Activated CD4-positive, alpha-beta T cell treated with anti-CD3 and anti-CD28 coated beads, Interleukin-2, amount 10 ng/mL, durations not matched to agents 24 days and 14 days (primary cell): ENCODE measurements at regions of chr14 and their contacts with region 1.

Region 1: DNA sequence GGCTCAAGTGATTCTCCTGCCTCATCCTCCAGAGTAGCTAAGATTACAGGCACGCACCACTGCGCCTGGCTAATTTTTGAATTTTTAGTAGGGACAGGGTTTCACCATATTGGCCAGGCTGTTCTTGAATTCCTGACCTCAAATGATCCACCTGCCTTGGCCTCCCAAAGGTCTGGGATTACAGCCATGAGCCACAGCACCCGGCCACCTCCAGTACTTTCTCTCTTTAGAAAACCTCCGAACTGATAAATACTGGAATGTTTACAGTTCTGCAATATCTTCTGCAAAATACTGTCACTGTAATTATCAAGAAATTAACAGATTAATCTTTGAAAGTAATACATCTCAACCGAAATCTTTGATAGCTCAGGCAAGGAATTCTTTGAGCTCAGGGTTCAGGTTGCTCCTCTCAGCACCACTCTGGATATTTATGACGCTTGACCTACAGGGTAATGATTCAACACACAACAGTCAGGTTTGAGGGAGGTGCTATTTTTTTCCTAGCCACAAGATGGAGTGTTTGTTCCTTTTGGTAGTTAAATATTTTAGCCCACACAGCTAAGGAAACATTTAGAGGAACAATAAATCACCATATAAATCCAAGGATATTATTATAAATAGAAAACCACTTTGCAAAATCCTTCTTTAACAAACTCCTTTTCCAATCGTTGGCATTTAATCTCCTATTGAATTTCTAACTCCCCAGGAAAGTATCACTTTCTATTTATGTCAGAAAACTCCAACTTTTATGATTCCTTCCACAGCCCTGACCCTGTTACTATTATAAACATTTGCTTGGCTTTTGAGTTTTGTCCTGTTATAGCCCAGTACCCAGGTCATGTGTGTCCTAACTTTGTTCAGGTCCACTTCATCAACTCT is 48.6 kb upstream of the GTF2A1 start:
- DNase-seq: peak; percentile 73
- H3K4me3 Mint-ChIP-seq: no peak overlapping the region
- H3K27ac Mint-ChIP-seq: no peak overlapping the region
- H3K4me1 Mint-ChIP-seq: peaks cover 11% of the 10 kb centered on the region
- H3K27me3 Mint-ChIP-seq: peaks cover 24% of the 10 kb centered on the region

Region 2: GRCh38 chr14:81247146-81247766 is 22.1 kb before region 1 on chr14:
- intact Hi-C with region 1: no loop called
- DNase-seq: no peak
- H3K4me3 Mint-ChIP-seq: no peak overlapping the region
- H3K27ac Mint-ChIP-seq: no peak overlapping the region
- H3K4me1 Mint-ChIP-seq: no peaks in the 10 kb centered on the region
- H3K27me3 Mint-ChIP-seq: no peaks in the 10 kb centered on the region

Region 3: GRCh38 chr14:81453166-81453766 is 183.9 kb after region 1 on chr14:
- intact Hi-C with region 1: loop called (anchors 1 kb)
- DNase-seq: peak; percentile 86
- H3K4me3 Mint-ChIP-seq: no peak overlapping the region
- H3K27ac Mint-ChIP-seq: no peak overlapping the region
- H3K4me1 Mint-ChIP-seq: no peaks in the 10 kb centered on the region
- H3K27me3 Mint-ChIP-seq: peaks cover 10% of the 10 kb centered on the region